Activated CD8-positive, alpha-beta T cell treated with anti-CD3 and anti-CD28 coated beads for 36 hours (primary cell): ENCODE measurements at regions of chr12 and their contacts with region 1.

Region 1: GRCh38 chr12:113965951-113966797 is at the start of gene RBM19:
- DNase-seq: peak; percentile 98
- ATAC-seq: peak; percentile 87
- H3K4me3 Mint-ChIP-seq: peak within 1 kb of the TSS; percentile 88
- H3K27ac Mint-ChIP-seq: peak within 1 kb of the TSS; percentile 97
- H3K4me1 Mint-ChIP-seq: peaks cover 49% of the 10 kb centered on the region
- H3K27me3 Mint-ChIP-seq: no peaks in the 10 kb centered on the region
- CTCF ChIP-seq: peak; percentile 76
- total RNA-seq, gene RBM19: 66.9 to 67.7 TPM

Region 2: DNA sequence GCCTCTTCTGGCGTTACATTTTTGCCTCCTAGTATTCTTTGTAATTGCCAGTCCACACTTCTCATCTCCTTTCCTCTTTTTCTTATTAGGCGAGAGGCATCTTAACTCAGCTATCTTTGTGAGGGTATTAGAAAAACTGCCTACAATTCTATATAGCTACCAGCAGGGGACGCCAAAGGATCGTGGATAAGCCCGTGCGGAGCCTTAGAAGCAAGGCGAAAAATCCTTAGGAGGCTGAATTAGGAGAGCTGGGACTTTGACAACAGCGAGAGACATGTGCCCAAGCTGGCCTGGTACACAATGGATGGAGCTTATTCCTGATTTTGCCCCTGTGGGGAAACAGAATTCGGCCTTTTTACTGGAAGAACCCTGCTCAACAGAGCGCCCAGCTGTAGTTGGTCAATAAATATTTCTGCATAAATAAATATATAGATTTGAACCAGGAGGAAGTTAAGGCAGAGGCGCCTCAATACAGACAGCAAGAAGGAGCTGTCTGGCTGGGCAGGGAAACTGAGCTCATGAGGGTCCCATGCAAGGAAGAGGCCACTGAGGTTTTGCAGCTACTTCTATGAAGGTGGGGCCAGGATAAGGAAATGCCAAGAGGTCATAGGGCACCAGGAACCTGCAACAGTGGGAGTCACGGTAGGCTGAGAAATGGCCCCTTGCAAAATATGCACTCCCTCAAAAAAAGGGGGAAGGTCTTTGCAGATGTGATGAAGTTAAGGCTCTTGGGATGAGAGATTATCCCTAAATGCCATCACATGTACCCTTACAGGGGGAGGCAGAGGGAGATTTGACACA is 14.6 kb after region 1 on chr12:
- CTCF ChIA-PET with region 1: interaction called, 39 read pairs
- POLR2A ChIA-PET with region 1: no interaction called
- intact Hi-C with region 1: no loop called
- DNase-seq: peak; percentile 37
- ATAC-seq: peak; percentile 65
- H3K4me3 Mint-ChIP-seq: no peak overlapping the region
- H3K27ac Mint-ChIP-seq: no peak overlapping the region
- H3K4me1 Mint-ChIP-seq: no peaks in the 10 kb centered on the region
- H3K27me3 Mint-ChIP-seq: peaks cover 21% of the 10 kb centered on the region
- CTCF ChIP-seq: peak; percentile 97